Mammary epithelial cell (primary cell): ENCODE measurements at regions of chr1 and their contacts with region 1.

Region 1: DNA sequence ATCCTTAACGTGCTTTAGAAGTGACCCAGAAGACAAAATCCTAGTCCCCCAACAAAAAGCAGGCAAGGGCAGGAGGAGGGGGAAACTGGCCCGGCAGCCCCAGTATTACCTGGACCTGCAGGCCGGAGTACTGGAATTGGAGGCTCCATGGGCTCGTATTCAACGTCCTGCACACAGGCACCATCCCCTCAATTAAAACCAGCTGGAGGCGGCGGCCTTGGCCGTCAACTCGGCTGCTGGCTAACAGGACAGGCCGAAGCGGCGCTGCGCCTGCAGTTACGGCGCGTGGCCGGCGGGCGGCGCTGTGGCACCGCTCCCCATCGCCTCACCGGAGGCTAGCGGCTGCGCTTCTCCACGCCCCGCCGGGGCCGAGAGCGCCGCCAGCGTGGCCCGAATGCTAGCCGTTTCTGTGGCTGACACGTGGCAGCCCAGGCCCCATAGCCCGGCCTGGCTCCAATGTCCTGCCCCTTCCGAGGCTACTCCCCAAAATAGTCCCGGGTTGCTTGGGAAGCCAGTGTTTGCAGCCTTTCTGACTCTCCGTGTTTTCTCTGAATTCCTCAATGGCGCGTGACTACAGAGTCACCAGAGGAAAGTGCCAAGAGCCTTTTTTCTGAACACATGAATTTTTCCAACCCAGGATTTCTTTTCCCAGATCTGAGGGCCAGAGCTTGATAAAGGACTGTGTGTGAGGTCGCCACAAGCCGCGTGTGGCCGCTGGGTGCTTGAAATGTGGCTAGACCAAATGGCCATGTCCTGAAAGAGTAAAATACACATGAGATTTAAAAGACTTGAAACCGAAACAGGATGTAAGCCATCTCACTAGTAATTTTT is 82.5 kb downstream of the HHIPL2 start:
- DNase-seq: peak; percentile 86
- H3K4me3 ChIP-seq: peak overlapping the region; percentile 30 to 39 (median 36)
- H3K27ac ChIP-seq: peak overlapping the region; percentile 75
- H3K4me1 ChIP-seq: peaks cover 10% of the 10 kb centered on the region
- H3K27me3 ChIP-seq: no peaks in the 10 kb centered on the region
- CTCF ChIP-seq: peak; percentile 91 to 92

Region 2: DNA sequence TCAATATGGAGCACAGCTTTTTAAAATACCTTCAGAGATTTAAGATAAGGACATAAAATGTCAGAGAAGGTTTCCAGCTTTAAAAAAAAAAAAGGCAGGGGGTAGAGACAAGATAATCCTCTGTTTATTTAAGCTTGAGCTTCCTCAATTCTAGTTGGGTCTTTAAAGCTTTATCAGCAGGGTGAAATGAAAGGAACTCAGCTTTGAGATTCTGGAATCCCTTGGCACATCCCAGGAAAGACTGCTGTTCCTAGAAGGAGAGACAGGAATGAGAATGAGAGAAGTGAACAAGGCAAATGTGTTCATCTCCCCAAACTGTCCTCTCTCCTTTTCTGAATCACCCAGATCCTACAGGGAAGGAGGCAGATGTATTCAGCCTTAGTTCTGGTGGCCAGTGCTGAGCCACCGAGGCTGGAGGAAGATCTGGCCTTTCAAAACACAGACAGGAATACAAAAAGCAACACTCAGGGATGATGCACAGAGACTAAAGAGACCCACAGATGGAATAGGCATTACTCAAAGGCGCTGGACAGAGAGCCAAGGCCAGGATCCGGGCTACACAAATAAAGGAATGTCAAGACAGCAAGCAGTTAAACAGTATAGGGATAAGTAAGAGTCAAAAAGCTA is 337.8 kb before region 1 on chr1:
- CTCF ChIA-PET with region 1: no interaction called
- dilution Hi-C with region 1: no loop called
- in situ Hi-C with region 1: no loop called
- intact Hi-C with region 1: no loop called
- DNase-seq: no peak
- H3K4me3 ChIP-seq: no peak overlapping the region
- H3K27ac ChIP-seq: no peak overlapping the region
- H3K4me1 ChIP-seq: no peaks in the 10 kb centered on the region
- H3K27me3 ChIP-seq: no peaks in the 10 kb centered on the region
- CTCF ChIP-seq: no peak

Region 3: GRCh38 chr1:222521299-222522104 is 56.1 kb after region 1 on chr1:
- CTCF ChIA-PET with region 1: no interaction called
- dilution Hi-C with region 1: no loop called
- in situ Hi-C with region 1: no loop called
- intact Hi-C with region 1: no loop called
- DNase-seq: peak; percentile 80
- H3K4me3 ChIP-seq: no peak overlapping the region
- H3K27ac ChIP-seq: no peak overlapping the region
- H3K4me1 ChIP-seq: no peaks in the 10 kb centered on the region
- H3K27me3 ChIP-seq: no peaks in the 10 kb centered on the region
- CTCF ChIP-seq: no peak

Region 4: GRCh38 chr1:222546548-222547259 is 81.3 kb after region 1 on chr1:
- CTCF ChIA-PET with region 1: no interaction called
- dilution Hi-C with region 1: no loop called
- in situ Hi-C with region 1: no loop called
- intact Hi-C with region 1: loop called (anchors 5 kb)
- DNase-seq: peak; percentile 88
- H3K4me3 ChIP-seq: no peak overlapping the region
- H3K27ac ChIP-seq: no peak overlapping the region
- H3K4me1 ChIP-seq: peaks cover 15% of the 10 kb centered on the region
- H3K27me3 ChIP-seq: no peaks in the 10 kb centered on the region
- CTCF ChIP-seq: no peak

Region 5: DNA sequence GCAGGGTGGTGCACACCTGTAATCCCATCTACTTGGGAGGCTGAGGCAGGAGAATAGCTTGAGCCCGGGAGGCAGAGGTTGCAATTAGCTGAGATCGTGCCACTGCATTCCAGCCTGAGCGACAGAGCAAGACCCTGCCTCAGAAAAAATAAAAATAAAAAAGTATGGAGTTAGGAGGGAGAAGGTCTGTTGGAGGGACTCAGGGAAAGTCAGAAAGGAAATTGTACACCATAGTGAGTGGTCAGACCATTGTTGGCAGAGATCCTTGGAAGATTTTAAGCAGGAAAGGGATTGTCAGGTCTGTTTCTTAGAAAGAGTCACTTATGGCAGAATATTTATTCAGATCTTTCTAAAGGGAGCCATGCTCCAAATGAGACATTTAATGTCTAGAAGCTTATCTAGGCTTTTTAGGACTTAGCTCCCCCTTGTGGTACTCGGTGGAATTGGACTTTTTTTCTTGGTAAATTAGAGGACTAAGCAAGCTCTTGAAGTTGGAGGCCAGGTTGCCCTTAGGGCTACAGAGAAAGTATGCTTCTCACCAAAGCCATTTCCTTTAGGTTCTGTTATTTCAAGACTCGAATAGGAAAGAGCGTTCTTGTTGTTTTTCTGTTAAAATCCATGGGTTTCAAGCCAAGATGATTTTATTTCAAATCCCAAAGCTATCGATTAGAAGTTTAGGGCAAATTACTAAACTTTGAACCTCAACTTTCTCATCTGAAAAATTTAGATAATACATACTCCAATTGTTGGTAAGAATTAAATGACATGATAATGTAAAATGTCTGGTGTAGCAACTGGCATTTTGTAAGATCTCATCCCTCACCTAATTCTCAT is 169.0 kb after region 1 on chr1:
- CTCF ChIA-PET with region 1: interaction called, 18 read pairs
- dilution Hi-C with region 1: no loop called
- in situ Hi-C with region 1: loop called (anchors 5 kb)
- intact Hi-C with region 1: loop called (anchors 1 kb)
- DNase-seq: peak; percentile 76
- H3K4me3 ChIP-seq: no peak overlapping the region
- H3K27ac ChIP-seq: no peak overlapping the region
- H3K4me1 ChIP-seq: no peaks in the 10 kb centered on the region
- H3K27me3 ChIP-seq: no peaks in the 10 kb centered on the region
- CTCF ChIP-seq: peak; percentile 82 to 85

Region 6: DNA sequence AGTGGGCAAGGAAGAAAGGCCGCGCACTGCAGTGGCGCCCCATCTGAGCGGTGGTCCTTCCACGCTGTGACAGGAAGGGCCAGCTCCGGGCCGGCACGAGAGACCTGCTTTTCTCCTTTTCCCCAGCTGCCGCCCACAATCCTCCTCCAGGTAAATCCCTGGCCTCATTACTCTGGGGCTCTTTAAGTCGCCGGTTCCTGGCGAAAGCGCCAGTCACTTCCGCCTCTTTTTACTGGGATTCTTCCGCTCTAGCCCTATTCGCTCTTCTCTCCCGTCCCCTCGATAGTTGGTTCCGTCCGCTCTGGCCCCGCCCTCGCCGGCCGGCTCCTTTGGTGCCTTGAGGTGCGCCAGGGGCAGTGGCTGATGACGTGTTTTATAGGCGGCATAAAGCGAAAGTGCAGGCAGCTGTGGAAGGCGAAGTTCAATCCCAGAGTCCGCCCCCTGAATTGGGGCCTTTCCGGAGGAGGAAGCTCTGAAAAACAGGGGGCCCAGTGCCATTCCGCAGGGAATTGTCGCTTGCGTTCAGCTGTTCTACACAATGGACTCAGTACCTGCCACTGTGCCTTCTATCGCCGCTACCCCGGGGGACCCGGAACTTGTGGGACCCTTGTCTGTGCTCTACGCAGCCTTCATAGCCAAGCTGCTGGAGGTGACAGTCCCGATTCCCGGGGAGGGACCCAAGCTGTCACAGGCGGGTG is 178.7 kb after region 1 on chr1:
- CTCF ChIA-PET with region 1: no interaction called
- dilution Hi-C with region 1: no loop called
- in situ Hi-C with region 1: no loop called
- intact Hi-C with region 1: loop called (anchors 1 kb)
- DNase-seq: peak; percentile 99
- H3K4me3 ChIP-seq: peak overlapping the region; percentile 66 to 95 (median 76)
- H3K27ac ChIP-seq: peak overlapping the region; percentile 87
- H3K4me1 ChIP-seq: peaks cover 5% of the 10 kb centered on the region
- H3K27me3 ChIP-seq: no peaks in the 10 kb centered on the region
- CTCF ChIP-seq: no peak

Region 7: DNA sequence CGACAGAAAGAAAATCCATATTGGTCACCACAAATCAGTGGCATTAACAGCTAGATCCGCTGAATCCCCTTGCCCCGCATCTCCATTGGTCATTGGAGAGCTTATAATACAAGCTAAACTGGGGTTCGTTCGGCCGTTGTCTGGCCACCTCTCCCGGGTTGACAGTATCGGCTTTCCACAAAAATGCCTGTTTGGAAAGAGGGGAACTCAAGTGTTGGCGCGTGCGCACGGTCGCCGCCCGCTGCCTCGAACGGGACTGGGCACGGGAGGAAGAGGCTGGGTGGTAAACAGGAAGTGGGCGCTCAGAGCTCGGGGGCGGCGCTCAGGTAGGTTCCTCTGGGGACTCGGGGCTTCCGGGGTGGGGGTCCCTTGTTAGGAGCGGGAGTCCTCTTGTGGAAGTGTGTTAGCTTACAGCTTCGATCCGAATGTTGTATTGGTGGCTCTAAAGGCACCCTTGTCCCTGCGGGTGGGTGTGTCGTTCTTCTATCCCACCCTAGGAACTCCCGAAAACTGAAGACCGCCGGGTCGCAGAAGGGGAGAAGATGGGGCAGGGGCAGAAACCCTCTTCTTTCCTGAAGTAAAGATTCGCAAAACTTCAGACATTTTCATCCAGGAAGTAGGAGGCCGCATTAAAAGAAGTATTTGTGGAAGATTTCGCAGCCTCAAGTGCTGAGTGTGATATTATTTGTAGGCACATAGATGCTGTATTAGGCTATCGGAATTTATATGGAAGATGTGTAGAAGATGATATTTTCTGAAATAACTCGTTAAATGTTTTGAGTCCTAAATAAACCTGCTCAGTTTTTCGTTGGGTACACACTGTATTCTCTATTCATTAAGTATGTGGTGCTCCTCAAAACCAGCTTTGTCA is 247.9 kb after region 1 on chr1:
- CTCF ChIA-PET with region 1: no interaction called
- dilution Hi-C with region 1: no loop called
- in situ Hi-C with region 1: no loop called
- intact Hi-C with region 1: loop called (anchors 1 kb)
- DNase-seq: peak; percentile 94
- H3K4me3 ChIP-seq: peak overlapping the region; percentile 57 to 93 (median 70)
- H3K27ac ChIP-seq: peak overlapping the region; percentile 96
- H3K4me1 ChIP-seq: peaks cover 13% of the 10 kb centered on the region
- H3K27me3 ChIP-seq: no peaks in the 10 kb centered on the region
- CTCF ChIP-seq: no peak

Region 8: GRCh38 chr1:223081181-223081994 is 616.0 kb after region 1 on chr1:
- CTCF ChIA-PET with region 1: no interaction called
- dilution Hi-C with region 1: no loop called
- in situ Hi-C with region 1: no loop called
- intact Hi-C with region 1: loop called (anchors 1 kb)
- DNase-seq: peak; percentile 92
- H3K4me3 ChIP-seq: peak overlapping the region in 2 of 3 experiments; percentile 22 to 34
- H3K27ac ChIP-seq: no peak overlapping the region
- H3K4me1 ChIP-seq: peaks cover 3% of the 10 kb centered on the region
- H3K27me3 ChIP-seq: peaks cover 4% of the 10 kb centered on the region
- CTCF ChIP-seq: peak; percentile 65 to 95